ENCODE measurements at regions of chr4 and their contacts with region 1.

Region 1: DNA sequence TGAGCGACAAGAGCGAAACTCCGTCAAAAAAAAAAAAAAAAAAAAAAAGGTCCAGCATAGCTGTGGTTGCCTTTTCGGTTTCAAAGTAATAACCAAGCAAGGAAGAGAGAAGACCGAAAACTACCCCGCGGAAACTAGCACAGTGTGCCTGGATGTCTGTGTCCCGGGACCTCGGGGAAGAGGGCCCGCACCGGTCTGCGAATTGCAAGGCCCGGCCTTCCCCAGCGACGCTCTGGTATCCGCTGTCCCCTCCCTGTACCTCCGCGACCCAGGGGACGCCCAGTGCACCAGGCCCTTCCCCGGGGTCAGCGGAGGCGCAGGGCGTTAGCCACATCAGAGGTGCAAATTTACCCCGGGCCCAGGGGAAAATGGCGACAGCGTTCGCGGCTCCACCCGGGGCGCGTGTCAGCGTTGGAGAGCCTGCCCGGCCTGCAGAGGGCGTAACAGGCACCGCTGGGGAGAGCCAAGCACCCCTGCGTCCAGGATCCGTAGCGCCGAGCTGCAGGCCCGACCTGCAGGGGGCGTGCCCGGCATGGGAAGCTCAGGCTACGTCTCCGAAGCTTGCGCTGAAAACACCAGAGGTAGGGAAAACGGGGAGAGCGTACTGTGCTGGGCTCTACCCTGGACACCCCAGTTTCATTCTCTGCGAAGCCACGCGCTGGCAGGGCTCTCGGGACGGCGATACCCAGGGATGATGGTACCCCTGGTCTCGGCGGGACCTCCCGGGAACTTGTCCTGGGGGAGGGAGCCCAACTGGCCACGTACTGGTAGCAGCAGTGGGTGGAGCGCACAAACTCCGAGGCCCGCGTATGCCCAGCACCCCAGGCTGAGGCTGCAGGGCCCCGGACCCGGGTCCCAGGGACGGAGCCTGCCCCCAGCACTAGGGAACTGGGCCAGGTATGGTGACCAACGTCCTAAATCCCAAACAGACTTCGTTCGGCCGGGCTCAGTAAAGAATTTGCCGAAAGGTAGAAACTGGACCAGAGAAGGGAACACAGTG is 16.2 kb downstream of the NKX6-1 start:
- DNase-seq: peak; percentile 96
- ATAC-seq: peak; percentile 78
- H3K4me3 Mint-ChIP-seq: peak overlapping the region; percentile 79
- H3K27ac Mint-ChIP-seq: no peak overlapping the region
- H3K4me1 Mint-ChIP-seq: peaks cover 38% of the 10 kb centered on the region
- H3K27me3 Mint-ChIP-seq: peaks cover 100% of the 10 kb centered on the region
- CTCF ChIP-seq: peak; percentile 95

Region 2: GRCh38 chr4:84167564-84167963 is 315.3 kb before region 1 on chr4:
- CTCF ChIA-PET with region 1: interaction called, 10 read pairs
- POLR2A ChIA-PET with region 1: no interaction called
- DNase-seq: peak; percentile 22
- ATAC-seq: peak; percentile 99
- H3K4me3 Mint-ChIP-seq: no peak overlapping the region
- H3K27ac Mint-ChIP-seq: no peak overlapping the region
- H3K4me1 Mint-ChIP-seq: peaks cover 6% of the 10 kb centered on the region
- H3K27me3 Mint-ChIP-seq: no peaks in the 10 kb centered on the region
- CTCF ChIP-seq: no peak

Region 3: DNA sequence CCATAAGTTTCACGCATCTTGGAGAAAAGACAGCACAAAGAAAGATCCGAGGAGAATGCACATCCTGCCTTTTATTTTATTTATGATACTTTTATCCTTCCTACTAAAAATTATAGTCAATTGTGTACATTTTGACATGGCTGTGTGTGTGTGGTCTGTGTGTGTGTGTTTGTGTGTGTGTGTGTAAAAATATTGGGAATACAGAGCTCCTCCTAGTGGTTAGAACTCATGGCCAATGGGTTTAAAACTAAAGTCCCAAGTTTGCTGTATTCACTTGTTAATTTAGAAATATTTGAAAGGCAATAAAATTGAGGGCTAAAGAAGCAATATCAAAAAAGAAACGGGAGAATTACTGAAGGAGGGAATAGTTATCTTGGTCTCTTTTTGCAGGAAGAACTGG is 31.3 kb before region 1 on chr4:
- CTCF ChIA-PET with region 1: interaction called, 29 read pairs
- POLR2A ChIA-PET with region 1: no interaction called
- DNase-seq: no peak
- ATAC-seq: 0 out of 2 replicates have a peak, but pooled peaks have one; percentile 34
- H3K4me3 Mint-ChIP-seq: no peak overlapping the region
- H3K27ac Mint-ChIP-seq: no peak overlapping the region
- H3K4me1 Mint-ChIP-seq: peaks cover 14% of the 10 kb centered on the region
- H3K27me3 Mint-ChIP-seq: no peaks in the 10 kb centered on the region
- CTCF ChIP-seq: peak; percentile 18; the same call in 1 of the 2 replicates

Region 4: GRCh38 chr4:84493092-84493850 is 10.4 kb after region 1 on chr4:
- CTCF ChIA-PET with region 1: interaction called, 242 read pairs
- POLR2A ChIA-PET with region 1: no interaction called
- DNase-seq: peak; percentile 69
- ATAC-seq: peak; percentile 14
- H3K4me3 Mint-ChIP-seq: peak overlapping the region; percentile 73
- H3K27ac Mint-ChIP-seq: no peak overlapping the region
- H3K4me1 Mint-ChIP-seq: peaks cover 51% of the 10 kb centered on the region
- H3K27me3 Mint-ChIP-seq: peaks cover 99% of the 10 kb centered on the region
- CTCF ChIP-seq: no peak

Region 5: DNA sequence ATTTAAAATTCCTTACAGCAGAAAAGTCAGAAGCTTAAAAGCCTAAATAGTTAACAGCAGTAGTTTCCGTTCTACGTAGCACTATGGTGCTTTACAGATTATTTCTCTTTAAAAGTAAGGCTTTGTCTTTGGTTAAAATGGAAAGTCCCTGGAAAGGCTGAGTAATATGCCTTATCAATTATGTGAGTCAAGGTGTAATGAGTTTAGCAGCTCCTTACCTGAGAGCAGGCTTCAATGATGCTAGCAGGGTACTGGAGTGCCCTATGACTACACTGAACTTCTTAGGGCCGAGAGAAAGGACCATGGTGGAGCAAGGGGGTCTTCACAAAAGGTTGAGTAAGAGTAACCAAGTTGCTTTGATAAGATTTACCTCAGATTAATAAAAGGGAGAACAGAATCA is 28.8 kb after region 1 on chr4:
- CTCF ChIA-PET with region 1: interaction called, 16 read pairs
- POLR2A ChIA-PET with region 1: no interaction called
- DNase-seq: no peak
- ATAC-seq: no peak
- H3K4me3 Mint-ChIP-seq: no peak overlapping the region
- H3K27ac Mint-ChIP-seq: no peak overlapping the region
- H3K4me1 Mint-ChIP-seq: no peaks in the 10 kb centered on the region
- H3K27me3 Mint-ChIP-seq: no peaks in the 10 kb centered on the region
- CTCF ChIP-seq: no peak

Region 6: GRCh38 chr4:85084380-85085094 is 601.7 kb after region 1 on chr4:
- CTCF ChIA-PET with region 1: no interaction called
- POLR2A ChIA-PET with region 1: no interaction called
- DNase-seq: no peak
- ATAC-seq: peak; percentile 70
- H3K4me3 Mint-ChIP-seq: no peak overlapping the region
- H3K27ac Mint-ChIP-seq: no peak overlapping the region
- H3K4me1 Mint-ChIP-seq: peaks cover 5% of the 10 kb centered on the region; the same call in 1 of the 2 replicates
- H3K27me3 Mint-ChIP-seq: no peaks in the 10 kb centered on the region
- CTCF ChIP-seq: peak; percentile 47